ENCODE measurements at regions of chr11 and their contacts with region 1.

Region 1: DNA sequence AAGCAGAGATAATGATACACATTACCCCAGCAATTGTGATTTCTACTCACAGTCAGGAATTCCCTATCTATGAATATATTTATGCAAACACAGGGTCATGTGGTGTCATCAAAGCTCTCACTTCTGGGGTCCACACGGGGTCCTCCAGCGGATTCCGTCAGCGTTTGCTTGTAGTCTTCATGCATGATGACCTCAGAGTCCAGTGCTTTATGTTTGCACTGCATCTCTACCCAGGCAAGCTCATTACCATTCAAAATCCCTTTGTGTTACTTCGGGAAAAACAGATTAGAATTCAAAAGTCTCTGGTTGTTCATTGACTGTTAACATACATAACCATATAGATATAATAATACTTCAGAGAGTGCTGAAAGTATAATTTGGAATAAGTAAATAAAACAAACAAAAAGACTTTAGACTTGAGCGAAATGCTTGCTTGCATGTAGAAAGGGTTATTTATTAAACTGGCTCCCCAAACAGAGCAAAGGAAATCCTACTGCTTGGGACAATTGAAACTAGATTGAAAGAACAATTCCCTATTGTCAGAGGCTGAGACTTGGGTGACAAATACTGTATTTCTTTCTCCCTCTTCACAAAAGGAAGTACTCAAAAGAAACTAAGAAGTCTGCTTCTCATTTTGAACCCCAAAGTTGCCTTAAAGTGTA is 423.1 kb downstream of the ETS1 start:
- DNase-seq: no peak
- H3K4me3 ChIP-seq: no peak overlapping the region
- H3K27ac ChIP-seq: peak overlapping the region in 1 of 8 donors; percentile 22
- H3K4me1 ChIP-seq: peaks cover 0 to 24% (median 12%) of the 10 kb centered on the region in 6 donors
- H3K27me3 ChIP-seq: no peaks in the 10 kb centered on the region
- CTCF ChIP-seq: no peak
- POLR2A ChIP-seq: no peak

Region 2: DNA sequence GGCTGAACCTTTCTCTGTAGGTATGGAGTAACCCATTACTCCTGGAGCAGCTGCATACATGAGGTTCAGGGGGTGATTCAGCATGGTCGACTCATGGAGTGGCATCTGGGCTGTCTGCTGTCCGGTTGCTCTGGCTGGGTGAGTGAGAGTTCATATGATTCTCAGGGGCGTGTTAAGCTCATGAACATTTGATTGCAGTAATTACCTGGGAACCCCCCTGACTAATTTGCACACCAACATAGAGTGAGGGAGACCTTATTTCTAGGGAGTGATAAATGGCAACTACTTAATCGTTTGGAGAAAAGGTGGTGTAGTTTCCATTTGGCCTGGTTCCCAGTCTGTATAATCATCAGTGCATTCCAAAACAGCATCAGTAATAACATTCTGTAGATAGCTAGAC is 238.7 kb before region 1 on chr11:
- intact Hi-C with region 1: no loop called
- DNase-seq: no peak
- H3K4me3 ChIP-seq: no peak overlapping the region
- H3K27ac ChIP-seq: no peak overlapping the region
- H3K4me1 ChIP-seq: no peaks in the 10 kb centered on the region
- H3K27me3 ChIP-seq: peaks cover 0 to 9% (median 0%) of the 10 kb centered on the region in 7 donors
- CTCF ChIP-seq: no peak
- POLR2A ChIP-seq: no peak

Region 3: DNA sequence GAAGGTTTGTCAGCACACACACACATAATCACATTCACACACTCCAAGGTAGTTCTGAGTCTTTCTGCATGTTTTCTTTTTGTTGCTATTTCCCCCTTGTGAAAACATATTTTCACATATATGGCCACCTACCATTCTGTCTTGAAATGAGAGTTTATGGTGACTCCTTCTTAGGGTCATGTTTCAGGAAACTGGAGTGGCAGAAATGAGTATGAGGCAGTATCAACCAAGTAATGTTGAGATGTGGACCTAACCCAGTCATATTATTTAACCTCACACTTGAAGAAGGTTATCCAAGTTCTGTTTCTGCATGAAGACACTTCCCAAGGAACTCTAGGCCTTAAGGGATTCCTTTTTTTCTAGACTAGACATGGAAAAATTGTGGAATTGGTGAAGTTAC is 58.3 kb before region 1 on chr11:
- intact Hi-C with region 1: no loop called
- DNase-seq: no peak
- H3K4me3 ChIP-seq: no peak overlapping the region
- H3K27ac ChIP-seq: no peak overlapping the region
- H3K4me1 ChIP-seq: no peaks in the 10 kb centered on the region
- H3K27me3 ChIP-seq: no peaks in the 10 kb centered on the region
- CTCF ChIP-seq: no peak
- POLR2A ChIP-seq: no peak

Region 4: GRCh38 chr11:128116885-128117284 is 47.3 kb before region 1 on chr11:
- intact Hi-C with region 1: no loop called
- DNase-seq: no peak
- H3K4me3 ChIP-seq: no peak overlapping the region
- H3K27ac ChIP-seq: no peak overlapping the region
- H3K4me1 ChIP-seq: peaks cover 0 to 6% (median 0%) of the 10 kb centered on the region in 6 donors
- H3K27me3 ChIP-seq: no peaks in the 10 kb centered on the region
- CTCF ChIP-seq: no peak
- POLR2A ChIP-seq: no peak

Region 5: GRCh38 chr11:128831174-128832120 is 667.2 kb after region 1 on chr11:
- intact Hi-C with region 1: loop called (anchors 10 kb)
- DNase-seq: peak; percentile 92
- H3K4me3 ChIP-seq: peak overlapping the region in 4 of 8 donors; percentile 15 to 54 (median 17)
- H3K27ac ChIP-seq: peak overlapping the region; percentile 33 to 84 (median 75)
- H3K4me1 ChIP-seq: peaks cover 34 to 79% (median 65%) of the 10 kb centered on the region in 6 donors
- H3K27me3 ChIP-seq: no peaks in the 10 kb centered on the region
- CTCF ChIP-seq: peak; percentile 76 to 94 (median 88)
- POLR2A ChIP-seq: no peak